Endothelial cell of umbilical vein (primary cell): ENCODE measurements at regions of chr16 and their contacts with region 1.

Region 1: GRCh38 chr16:55559233-55559632 is 7.3 kb upstream of the CAPNS2 start:
- DNase-seq: peak; percentile 91
- H3K4me3 ChIP-seq: peak overlapping the region in 1 of 3 experiments; percentile 42
- H3K27ac ChIP-seq: peak overlapping the region; percentile 68
- H3K4me1 ChIP-seq: peaks cover 69% of the 10 kb centered on the region
- H3K27me3 ChIP-seq: no peaks in the 10 kb centered on the region
- CTCF ChIP-seq: no peak
- POLR2A ChIP-seq: no peak

Region 2: DNA sequence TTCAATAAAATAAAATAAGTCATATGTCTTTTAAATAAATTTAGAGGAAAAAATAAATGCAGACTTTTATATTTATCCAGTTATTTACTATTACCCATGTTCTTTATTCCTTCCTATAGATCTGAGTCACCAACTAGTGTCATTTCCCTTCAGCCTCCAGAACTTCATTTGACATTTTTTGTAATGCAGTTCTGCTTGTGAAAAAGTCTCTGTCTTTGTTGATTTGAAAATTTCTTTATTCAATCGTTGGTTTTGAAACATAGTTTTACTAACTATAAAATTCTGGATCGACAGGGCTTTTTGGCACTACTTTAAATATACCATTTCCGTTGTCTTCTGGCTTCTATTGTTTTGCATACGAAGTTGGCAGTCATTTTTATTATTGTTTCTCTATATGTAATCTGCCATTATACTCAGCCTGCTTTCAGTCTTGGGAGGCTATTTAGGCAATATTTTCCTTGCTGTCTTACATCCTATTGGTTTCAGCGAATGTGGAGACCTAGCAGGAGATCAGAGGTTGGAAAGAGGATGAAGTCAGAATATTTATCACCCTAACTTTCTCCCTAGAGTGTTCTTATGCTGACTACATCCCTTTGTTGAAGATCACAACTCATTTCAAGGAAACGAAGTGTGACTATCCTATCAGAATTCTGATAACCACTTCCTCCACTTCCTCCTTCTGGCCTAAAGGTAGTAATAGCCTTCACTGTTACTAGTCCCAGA is 54.5 kb after region 1 on chr16:
- CTCF ChIA-PET with region 1: interaction called, 3 read pairs
- POLR2A ChIA-PET with region 1: no interaction called
- dilution Hi-C with region 1: no loop called
- intact Hi-C with region 1: loop called (anchors 1 kb)
- DNase-seq: peak; percentile 72
- H3K4me3 ChIP-seq: peak overlapping the region in 1 of 3 experiments; percentile 18
- H3K27ac ChIP-seq: peak overlapping the region; percentile 64
- H3K4me1 ChIP-seq: peaks cover 22% of the 10 kb centered on the region
- H3K27me3 ChIP-seq: no peaks in the 10 kb centered on the region
- CTCF ChIP-seq: no peak
- POLR2A ChIP-seq: no peak